Gastrocnemius medialis (tissue), 4 donors: ENCODE measurements at regions of chr1 and their contacts with region 1.

Region 1: GRCh38 chr1:151762941-151763921 is at the start of gene MRPL9:
- DNase-seq: peak; percentile 60 to 71
- ATAC-seq: peak; percentile 90 to 95
- H3K4me3 ChIP-seq: peak within 1 kb of the TSS; percentile 76 to 96 (median 90)
- H3K27ac ChIP-seq: peak within 1 kb of the TSS; percentile 88 to 94 (median 90)
- H3K4me1 ChIP-seq: peaks cover 10 to 13% of the 10 kb centered on the region in 2 donors
- H3K27me3 ChIP-seq: no peaks in the 10 kb centered on the region
- CTCF ChIP-seq: peak in 1 of 5 experiments; percentile 13
- POLR2A ChIP-seq: peak in 1 of 2 donors; percentile 8
- total RNA-seq, gene MRPL9: 61.4 to 74.7 (median 65.6) TPM

Region 2: GRCh38 chr1:151459331-151460046 is 303.7 kb before region 1 on chr1 and contains the start of gene POGZ:
- in situ Hi-C with region 1: no loop called
- intact Hi-C with region 1: no loop called
- DNase-seq: peak; percentile 91 to 95
- ATAC-seq: peak; percentile 82 to 83
- H3K4me3 ChIP-seq: peak within 1 kb of the TSS; percentile 76 to 97 (median 84)
- H3K27ac ChIP-seq: peak within 1 kb of the TSS; percentile 87 to 98 (median 96)
- H3K4me1 ChIP-seq: peaks cover 11 to 16% of the 10 kb centered on the region in 2 donors
- H3K27me3 ChIP-seq: peaks cover 0 to 2% (median 0%) of the 10 kb centered on the region in 3 donors
- CTCF ChIP-seq: no peak
- POLR2A ChIP-seq: peak; percentile 37 to 39
- total RNA-seq, gene POGZ: 14.1 to 20.2 (median 15.1) TPM

Region 3: DNA sequence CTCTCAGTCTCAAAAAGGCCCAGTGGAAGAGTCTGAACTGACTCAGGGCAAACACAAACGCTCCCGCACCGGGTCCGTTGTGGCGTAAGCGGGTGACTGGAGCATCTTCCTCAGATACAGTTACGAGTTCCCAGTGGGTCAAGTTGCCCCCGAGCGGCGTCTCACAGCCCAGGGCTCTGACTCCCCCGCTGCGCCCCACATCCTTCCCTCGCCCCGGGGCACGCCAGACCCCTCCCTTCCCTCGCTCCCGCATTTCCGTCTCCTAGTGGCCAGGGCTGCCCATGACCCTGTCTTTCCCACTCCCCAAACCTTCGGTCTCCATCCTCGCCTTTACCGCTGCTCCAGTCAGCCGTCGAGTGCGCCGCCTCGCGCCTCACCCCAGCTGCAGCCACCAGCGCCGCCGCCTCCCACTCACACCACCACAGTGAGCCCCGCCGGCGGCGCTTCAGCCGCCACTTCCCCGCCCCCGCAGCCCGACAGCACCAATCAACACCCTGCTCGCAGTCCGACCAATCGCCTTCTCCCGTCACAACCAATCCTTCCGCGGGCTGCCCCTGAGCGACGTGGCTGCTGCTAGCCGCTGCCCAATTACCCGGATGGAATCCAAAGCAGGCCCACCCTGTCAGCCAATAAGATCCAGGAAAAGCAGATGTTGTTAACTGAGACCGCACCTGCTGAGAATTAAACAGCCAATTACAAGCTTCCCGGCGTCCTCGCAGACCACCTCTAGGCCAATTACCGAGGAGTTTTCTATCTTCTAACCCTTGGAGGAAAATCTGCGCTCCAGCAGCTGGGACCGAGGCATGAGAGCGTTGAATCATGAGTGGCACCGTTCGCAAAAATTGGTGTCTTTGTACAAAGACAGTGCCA is 27.1 kb after region 1 on chr1 and contains the start of gene TDRKH:
- in situ Hi-C with region 1: no loop called
- intact Hi-C with region 1: loop called (anchors 1 kb)
- DNase-seq: peak; percentile 99
- ATAC-seq: peak; percentile 99
- H3K4me3 ChIP-seq: peak within 1 kb of the TSS; percentile 63 to 88 (median 84)
- H3K27ac ChIP-seq: peak within 1 kb of the TSS; percentile 75 to 80 (median 80)
- H3K4me1 ChIP-seq: peaks cover 12 to 14% of the 10 kb centered on the region in 2 donors
- H3K27me3 ChIP-seq: no peaks in the 10 kb centered on the region
- CTCF ChIP-seq: peak in 3 of 5 experiments; percentile 23 to 40 (median 39)
- POLR2A ChIP-seq: peak; percentile 65 to 86
- total RNA-seq, gene TDRKH: 3.9 to 8.3 (median 4.6) TPM

Region 4: DNA sequence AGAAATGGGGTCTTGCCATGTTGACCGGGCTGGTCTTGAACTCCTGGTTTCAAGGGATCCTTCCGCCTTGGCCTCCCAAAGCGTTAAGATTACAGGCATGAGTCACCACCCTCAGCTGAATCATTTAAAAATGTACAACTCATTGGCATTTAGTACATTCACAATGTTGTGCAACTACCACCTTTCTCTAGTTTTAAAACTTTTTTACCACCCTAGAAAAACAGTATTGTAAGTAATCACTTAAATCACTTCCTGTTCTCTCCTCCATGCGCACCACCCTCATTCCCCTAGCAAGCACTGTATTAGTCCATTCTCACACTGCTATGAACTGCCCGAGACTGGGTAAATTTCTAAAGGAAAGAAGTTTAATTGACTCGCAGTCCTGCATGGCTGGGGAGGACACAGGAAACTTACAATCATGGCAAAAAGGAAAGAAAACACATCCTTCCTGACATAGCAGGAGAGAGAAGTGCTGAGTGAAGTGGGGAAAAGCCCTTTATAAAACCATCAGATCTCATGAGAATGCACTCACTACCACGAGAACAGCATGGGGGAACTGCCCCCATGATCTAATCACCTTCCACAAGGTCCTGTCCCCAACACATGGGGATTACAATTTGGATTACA is 104.7 kb after region 1 on chr1:
- in situ Hi-C with region 1: no loop called
- intact Hi-C with region 1: no loop called
- DNase-seq: no peak
- ATAC-seq: no peak
- H3K4me3 ChIP-seq: no peak overlapping the region
- H3K27ac ChIP-seq: no peak overlapping the region
- H3K4me1 ChIP-seq: no peaks in the 10 kb centered on the region
- H3K27me3 ChIP-seq: no peaks in the 10 kb centered on the region
- CTCF ChIP-seq: no peak
- POLR2A ChIP-seq: no peak

Region 5: GRCh38 chr1:151984313-151984956 is 221.2 kb after region 1 on chr1:
- in situ Hi-C with region 1: no loop called
- intact Hi-C with region 1: no loop called
- DNase-seq: no peak
- ATAC-seq: no peak
- H3K4me3 ChIP-seq: no peak overlapping the region
- H3K27ac ChIP-seq: no peak overlapping the region
- H3K4me1 ChIP-seq: peaks cover 12 to 24% of the 10 kb centered on the region in 2 donors
- H3K27me3 ChIP-seq: no peaks in the 10 kb centered on the region
- CTCF ChIP-seq: no peak
- POLR2A ChIP-seq: no peak